CD8-positive, alpha-beta T cell (primary cell): ENCODE measurements at regions of chr12 and their contacts with region 1.

Region 1: DNA sequence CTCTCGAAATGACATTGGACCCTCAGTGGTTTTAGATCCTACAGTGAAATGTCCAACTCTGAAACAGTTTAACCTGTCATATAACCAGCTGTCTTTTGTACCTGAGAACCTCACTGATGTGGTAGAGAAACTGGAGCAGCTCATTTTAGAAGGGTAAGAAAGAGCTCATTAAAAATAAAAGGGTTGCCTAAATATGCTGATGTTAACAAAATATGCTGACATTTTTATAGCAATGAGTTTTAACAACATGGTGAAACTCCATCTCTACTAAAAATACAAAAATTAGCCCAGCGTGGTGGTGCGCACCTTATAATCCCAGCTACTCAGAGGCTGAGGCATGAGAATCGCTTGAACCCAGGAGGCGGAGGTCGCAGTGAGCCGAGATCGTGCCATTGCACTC is 73.5 kb downstream of the LRRK2 start:
- DNase-seq: no peak
- ATAC-seq: no peak
- H3K4me3 ChIP-seq: no peak overlapping the region
- H3K4me3 Mint-ChIP-seq: no peak overlapping the region
- H3K27ac ChIP-seq: no peak overlapping the region
- H3K27ac Mint-ChIP-seq: no peak overlapping the region
- H3K4me1 ChIP-seq: no peaks in the 10 kb centered on the region
- H3K4me1 Mint-ChIP-seq: no peaks in the 10 kb centered on the region
- H3K27me3 ChIP-seq: no peaks in the 10 kb centered on the region
- H3K27me3 Mint-ChIP-seq: no peaks in the 10 kb centered on the region
- CTCF ChIP-seq: no peak

Region 2: GRCh38 chr12:40286583-40286982 is 11.8 kb before region 1 on chr12:
- CTCF ChIA-PET with region 1: no interaction called
- POLR2A ChIA-PET with region 1: no interaction called
- intact Hi-C with region 1: no loop called
- DNase-seq: no peak
- ATAC-seq: no peak
- H3K4me3 ChIP-seq: no peak overlapping the region
- H3K4me3 Mint-ChIP-seq: no peak overlapping the region
- H3K27ac ChIP-seq: no peak overlapping the region
- H3K27ac Mint-ChIP-seq: no peak overlapping the region
- H3K4me1 ChIP-seq: no peaks in the 10 kb centered on the region
- H3K4me1 Mint-ChIP-seq: no peaks in the 10 kb centered on the region
- H3K27me3 ChIP-seq: no peaks in the 10 kb centered on the region
- H3K27me3 Mint-ChIP-seq: no peaks in the 10 kb centered on the region
- CTCF ChIP-seq: no peak

Region 3: GRCh38 chr12:41504976-41505375 is 1206.6 kb after region 1 on chr12:
- CTCF ChIA-PET with region 1: no interaction called
- POLR2A ChIA-PET with region 1: no interaction called
- intact Hi-C with region 1: loop called in 1 of 2 experiments (anchors 5 kb)
- DNase-seq: no peak
- ATAC-seq: no peak
- H3K4me3 ChIP-seq: no peak overlapping the region
- H3K4me3 Mint-ChIP-seq: no peak overlapping the region
- H3K27ac ChIP-seq: no peak overlapping the region
- H3K27ac Mint-ChIP-seq: no peak overlapping the region
- H3K4me1 ChIP-seq: no peaks in the 10 kb centered on the region
- H3K4me1 Mint-ChIP-seq: no peaks in the 10 kb centered on the region
- H3K27me3 ChIP-seq: no peaks in the 10 kb centered on the region
- H3K27me3 Mint-ChIP-seq: no peaks in the 10 kb centered on the region
- CTCF ChIP-seq: no peak